ENCODE measurements at regions of chr22 and their contacts with region 1.

Region 1: GRCh38 chr22:31272522-31273446 is 19.5 kb downstream of the PIK3IP1 start:
- DNase-seq: peak; percentile 32
- H3K4me3 ChIP-seq: no peak overlapping the region
- H3K27ac ChIP-seq: no peak overlapping the region
- H3K27me3 ChIP-seq: no peaks in the 10 kb centered on the region
- CTCF ChIP-seq: peak; percentile 87

Region 2: DNA sequence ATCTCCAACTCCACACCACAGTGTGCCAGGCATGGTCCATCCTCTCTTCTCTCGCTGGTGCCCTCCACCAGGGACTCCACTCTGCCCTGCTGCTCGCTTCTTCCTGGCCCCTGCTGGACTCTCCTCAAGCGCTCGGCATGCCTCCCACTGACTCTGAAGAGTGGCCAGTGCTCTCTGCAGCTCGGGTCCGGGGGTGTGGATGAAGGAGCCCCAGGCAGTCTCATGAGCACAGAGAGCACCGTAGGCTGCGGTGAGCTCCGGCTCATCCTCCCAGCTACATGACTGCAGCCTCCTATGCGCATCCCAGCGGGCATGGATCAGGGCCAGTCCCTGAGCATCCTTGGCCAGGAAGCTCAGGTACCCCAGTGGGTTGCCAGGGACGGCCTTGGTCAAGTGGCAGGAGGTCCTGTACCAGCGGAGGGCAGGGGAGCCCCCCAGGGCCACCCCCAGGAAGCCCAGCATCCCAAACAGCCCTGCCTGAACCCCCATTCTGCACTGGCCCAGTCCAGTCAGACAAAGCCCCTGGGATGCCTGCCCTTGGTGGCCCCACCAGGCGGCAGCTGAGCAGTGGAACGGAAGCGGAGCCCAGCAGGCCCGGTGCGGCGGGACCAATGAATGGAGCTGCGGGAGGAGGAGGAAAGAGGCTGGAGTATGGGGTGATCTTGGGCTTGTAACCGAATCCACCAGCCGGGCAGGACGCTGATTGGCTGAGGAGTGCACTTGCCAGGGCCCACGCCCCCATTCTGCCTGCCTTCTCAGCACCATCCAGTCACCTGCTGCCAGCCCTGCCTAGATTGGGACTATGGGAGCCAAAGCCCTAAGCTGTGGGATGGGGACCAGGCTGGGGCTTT is 132.7 kb before region 1 on chr22 and contains the start of gene PLA2G3:
- CTCF ChIA-PET with region 1: no interaction called
- POLR2A ChIA-PET with region 1: no interaction called
- DNase-seq: no peak
- H3K4me3 ChIP-seq: no peak within 1 kb of the TSS
- H3K27ac ChIP-seq: no peak within 1 kb of the TSS
- H3K27me3 ChIP-seq: peaks cover 27% of the 10 kb centered on the region
- CTCF ChIP-seq: peak; percentile 26; the same call in 1 of the 2 replicates
- polyA plus RNA-seq, gene PLA2G3: 0.10 and 0.11 TPM in 2 replicates

Region 3: DNA sequence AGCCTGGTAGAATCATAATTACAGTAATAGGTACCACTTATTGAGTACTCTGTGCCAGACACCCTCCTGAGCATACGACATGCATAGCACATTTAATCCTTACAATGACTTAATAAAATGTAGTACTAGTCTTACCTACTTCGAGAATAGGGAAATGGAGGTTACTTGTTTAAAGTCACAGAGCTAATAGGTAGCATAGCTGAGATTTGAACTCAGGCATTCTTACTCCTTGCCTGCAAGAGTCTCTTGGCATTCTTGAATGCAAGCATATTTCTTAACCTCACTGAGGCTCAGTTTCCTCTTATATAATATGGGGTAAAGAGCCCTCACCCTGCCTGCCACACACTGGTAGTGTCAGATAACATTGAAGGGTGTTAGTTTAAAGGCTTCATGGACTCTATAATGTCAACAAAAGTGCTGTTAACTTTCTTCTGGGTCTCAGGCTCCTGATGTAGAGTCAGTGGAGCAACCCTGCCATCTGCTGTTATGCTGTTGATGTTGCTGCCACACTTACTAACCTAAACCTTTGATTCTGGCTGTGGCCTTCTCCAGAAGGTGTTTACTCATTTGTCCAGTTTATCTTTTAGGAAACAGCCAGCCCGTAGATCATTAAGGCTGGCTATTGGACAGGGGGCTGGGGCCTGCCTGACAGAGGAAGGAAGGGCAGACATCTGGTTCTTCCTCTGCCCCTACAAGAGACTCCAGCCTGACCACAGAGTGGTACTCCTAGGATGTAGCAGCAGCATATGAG is 41.7 kb before region 1 on chr22:
- CTCF ChIA-PET with region 1: interaction called, 20 read pairs
- POLR2A ChIA-PET with region 1: no interaction called
- DNase-seq: peak; percentile 53
- H3K4me3 ChIP-seq: no peak overlapping the region
- H3K27ac ChIP-seq: no peak overlapping the region
- H3K27me3 ChIP-seq: no peaks in the 10 kb centered on the region
- CTCF ChIP-seq: peak; percentile 87

Region 4: DNA sequence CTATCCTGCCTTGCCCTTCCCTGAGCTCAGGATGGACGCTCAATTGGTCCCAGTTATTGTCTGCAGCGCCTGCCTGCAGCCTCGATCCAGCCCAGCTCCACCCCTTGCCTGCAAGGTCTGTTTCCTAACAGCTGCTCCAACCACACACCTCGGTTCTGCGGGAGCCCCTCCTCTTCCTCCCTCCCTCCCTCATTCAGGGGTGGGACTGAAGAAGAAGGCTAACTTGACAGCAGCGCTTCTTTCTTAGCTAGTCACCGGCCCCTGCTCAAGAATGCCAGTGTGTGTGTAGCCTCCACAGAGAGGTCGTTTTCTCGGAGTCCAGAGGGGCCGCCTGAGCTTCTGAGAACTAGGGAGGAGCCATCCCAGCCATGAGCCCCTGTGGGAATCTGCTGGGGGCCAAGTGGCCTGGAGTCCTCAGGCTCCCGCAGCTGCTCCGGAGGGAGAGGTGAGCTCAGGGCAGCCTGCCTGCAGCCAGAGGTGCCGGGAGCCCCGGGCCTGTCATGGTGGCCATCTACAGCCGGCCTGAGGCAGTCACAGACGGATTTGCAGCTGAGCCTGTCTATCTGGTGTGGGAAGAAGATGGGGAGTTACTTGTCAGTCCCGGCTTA is 24.5 kb before region 1 on chr22:
- CTCF ChIA-PET with region 1: interaction called, 46 read pairs
- POLR2A ChIA-PET with region 1: interaction called, 3 read pairs
- DNase-seq: peak; percentile 80
- H3K4me3 ChIP-seq: peak overlapping the region; percentile 74
- H3K27ac ChIP-seq: peak overlapping the region; percentile 61
- H3K27me3 ChIP-seq: no peaks in the 10 kb centered on the region
- CTCF ChIP-seq: no peak

Region 5: GRCh38 chr22:31259779-31260479 is 12.9 kb before region 1 on chr22:
- CTCF ChIA-PET with region 1: interaction called, 44 read pairs
- POLR2A ChIA-PET with region 1: no interaction called
- DNase-seq: no peak
- H3K4me3 ChIP-seq: no peak overlapping the region
- H3K27ac ChIP-seq: no peak overlapping the region
- H3K27me3 ChIP-seq: no peaks in the 10 kb centered on the region
- CTCF ChIP-seq: no peak

Region 6: GRCh38 chr22:31295831-31296657 is 23.3 kb after region 1 on chr22:
- CTCF ChIA-PET with region 1: interaction called, 26 read pairs
- POLR2A ChIA-PET with region 1: interaction called, 6 read pairs
- DNase-seq: no peak
- H3K4me3 ChIP-seq: no peak overlapping the region
- H3K27ac ChIP-seq: no peak overlapping the region
- H3K27me3 ChIP-seq: no peaks in the 10 kb centered on the region
- CTCF ChIP-seq: no peak